ENCODE measurements at regions of chr1 and their contacts with region 1.

Region 1: DNA sequence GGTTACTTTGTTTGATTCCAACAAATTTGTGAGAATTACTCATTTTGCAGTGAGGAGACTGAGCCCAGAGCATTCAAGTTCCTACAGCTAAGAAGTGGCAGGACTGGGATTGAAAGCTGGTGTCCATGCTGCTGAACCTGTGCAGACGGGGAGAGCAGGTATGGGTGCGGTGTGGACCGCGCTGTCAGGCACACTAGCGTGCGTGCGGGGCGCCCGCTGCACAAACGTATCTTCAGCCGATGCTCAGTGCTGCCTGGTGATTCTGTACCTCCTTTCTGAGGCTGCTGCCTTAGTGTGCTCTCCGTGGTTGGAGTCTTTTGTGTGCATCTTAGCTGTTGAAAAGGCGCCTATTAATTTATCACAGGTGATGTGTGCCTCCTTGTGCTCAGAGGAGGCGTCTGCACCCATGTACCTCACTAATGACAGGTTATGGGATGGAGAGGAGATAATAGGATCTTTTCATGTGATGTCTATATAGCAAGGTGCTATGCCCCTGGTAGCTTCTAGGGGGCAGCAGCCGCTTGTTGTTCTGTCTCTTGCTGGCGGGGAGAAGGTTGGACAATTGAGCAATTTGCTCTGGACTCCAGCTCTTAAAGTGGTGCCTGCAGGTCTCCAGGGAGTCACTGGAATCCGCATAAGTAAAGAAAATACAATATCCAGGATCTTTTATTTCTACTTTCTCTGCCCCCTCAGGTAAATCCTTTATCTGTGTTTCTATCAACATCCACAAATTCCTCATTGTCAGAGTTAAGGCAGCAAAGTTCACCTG is 32.5 kb downstream of the PEX14 start:
- DNase-seq: peak; percentile 84
- ATAC-seq: peak; percentile 91
- H3K4me3 ChIP-seq: no peak overlapping the region
- H3K27ac ChIP-seq: no peak overlapping the region
- H3K4me1 ChIP-seq: peaks cover 63% of the 10 kb centered on the region
- H3K27me3 ChIP-seq: no peaks in the 10 kb centered on the region
- CTCF ChIP-seq: peak; percentile 88
- EP300 ChIP-seq: no peak
- POLR2A ChIP-seq: no peak
- RAD21 ChIP-seq: peak; percentile 70

Region 2: DNA sequence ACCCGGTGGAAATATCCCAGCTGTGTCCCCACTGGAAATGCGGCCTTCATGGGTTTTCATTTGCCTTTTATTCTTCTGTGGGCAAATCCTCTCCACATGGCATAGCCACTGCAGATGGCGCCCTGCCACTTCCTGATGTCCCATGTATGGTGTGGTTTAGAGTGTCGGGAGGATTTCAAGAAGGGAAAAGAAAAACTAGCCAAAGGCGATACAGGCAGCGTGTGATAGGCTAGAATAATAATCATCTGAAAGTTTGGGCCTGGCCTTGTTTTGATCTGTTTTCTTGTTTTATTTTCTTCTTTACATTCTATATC is 91.1 kb after region 1 on chr1:
- CTCF ChIA-PET with region 1: no interaction called
- POLR2A ChIA-PET with region 1: no interaction called
- in situ Hi-C with region 1: no loop called
- intact Hi-C with region 1: loop called (anchors 10 kb)
- DNase-seq: no peak
- ATAC-seq: no peak
- H3K4me3 ChIP-seq: 0 out of 6 replicates have a peak overlapping the region, but pooled peaks of 1 of the 3 experiments have one; percentile 0
- H3K27ac ChIP-seq: peak overlapping the region; percentile 69
- H3K4me1 ChIP-seq: peaks cover 46% of the 10 kb centered on the region
- H3K27me3 ChIP-seq: no peaks in the 10 kb centered on the region
- CTCF ChIP-seq: no peak
- EP300 ChIP-seq: no peak
- POLR2A ChIP-seq: no peak
- RAD21 ChIP-seq: no peak

Region 3: DNA sequence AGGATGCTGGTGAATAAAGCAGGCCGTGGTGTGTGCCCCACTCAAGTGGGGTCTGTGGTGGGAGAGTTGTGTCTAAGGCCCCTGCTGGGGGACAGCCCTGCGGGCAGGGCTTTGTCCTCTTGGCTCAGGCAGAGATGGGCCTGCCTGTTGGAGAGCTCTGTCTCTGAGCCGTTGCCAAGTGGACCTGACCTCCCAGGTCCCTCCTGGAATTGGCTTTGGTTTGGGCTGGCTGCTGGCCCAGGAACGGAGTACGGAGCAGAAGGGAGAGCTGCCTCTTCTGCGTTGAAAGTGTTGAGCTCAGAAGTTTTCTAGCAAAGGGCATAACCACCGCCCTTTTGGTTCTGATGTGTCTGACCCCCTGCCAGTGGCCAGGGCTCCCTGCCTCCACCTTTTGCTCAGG is 121.4 kb after region 1 on chr1:
- CTCF ChIA-PET with region 1: no interaction called
- POLR2A ChIA-PET with region 1: no interaction called
- in situ Hi-C with region 1: no loop called
- intact Hi-C with region 1: loop called (anchors 10 kb)
- DNase-seq: no peak
- ATAC-seq: no peak
- H3K4me3 ChIP-seq: no peak overlapping the region
- H3K27ac ChIP-seq: no peak overlapping the region
- H3K4me1 ChIP-seq: peaks cover 10% of the 10 kb centered on the region
- H3K27me3 ChIP-seq: no peaks in the 10 kb centered on the region
- CTCF ChIP-seq: no peak
- EP300 ChIP-seq: no peak
- POLR2A ChIP-seq: no peak
- RAD21 ChIP-seq: no peak

Region 4: DNA sequence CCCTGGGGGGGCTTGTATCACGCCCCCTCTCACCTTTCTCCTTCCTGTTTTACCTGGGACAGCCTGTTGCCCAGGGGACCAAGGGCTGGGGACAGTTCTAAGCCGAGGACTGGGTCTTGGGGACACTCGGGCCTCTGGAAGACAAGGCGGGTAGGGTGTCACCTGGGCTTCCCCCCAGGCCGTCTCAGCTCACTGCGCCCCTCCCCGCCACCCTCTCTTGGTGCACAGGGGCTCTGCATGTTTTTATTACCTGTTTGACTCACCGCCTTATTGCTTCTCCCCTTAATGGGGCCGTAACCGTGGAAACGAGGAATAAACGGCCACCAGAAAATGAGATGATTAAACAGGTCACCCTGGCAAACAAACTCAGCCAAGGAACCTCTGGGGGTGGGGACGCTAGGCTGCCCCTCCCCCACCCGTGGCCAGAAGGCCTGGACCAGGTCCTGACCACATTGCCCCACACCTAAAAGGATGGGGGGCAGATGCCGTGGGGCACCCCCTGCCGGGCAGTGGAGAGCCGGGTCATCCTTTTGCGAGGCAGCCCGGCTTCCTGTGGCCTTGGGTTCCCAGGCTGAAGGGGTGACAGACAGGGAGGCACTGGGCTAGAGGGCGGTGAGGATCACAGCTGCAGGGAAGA is 179.2 kb after region 1 on chr1:
- CTCF ChIA-PET with region 1: no interaction called
- POLR2A ChIA-PET with region 1: interaction called, 3 read pairs
- in situ Hi-C with region 1: no loop called
- intact Hi-C with region 1: loop called (anchors 5 kb)
- DNase-seq: peak; percentile 71
- ATAC-seq: peak; percentile 74
- H3K4me3 ChIP-seq: peak overlapping the region; percentile 35 to 61 (median 39); a peak in 5 of 6 replicates
- H3K27ac ChIP-seq: peak overlapping the region; percentile 90
- H3K4me1 ChIP-seq: peaks cover 77% of the 10 kb centered on the region
- H3K27me3 ChIP-seq: no peaks in the 10 kb centered on the region; a peak in 1 of 5 replicates
- CTCF ChIP-seq: peak; percentile 83
- EP300 ChIP-seq: peak in 1 of 2 experiments; percentile 19; a peak in 1 of 4 replicates
- POLR2A ChIP-seq: no peak
- RAD21 ChIP-seq: peak; percentile 42; the same call in 1 of the 2 replicates

Region 5: GRCh38 chr1:10788592-10789006 is 281.3 kb after region 1 on chr1:
- CTCF ChIA-PET with region 1: interaction called, 6 read pairs
- POLR2A ChIA-PET with region 1: no interaction called
- in situ Hi-C with region 1: loop called (anchors 5 kb)
- intact Hi-C with region 1: no loop called
- DNase-seq: peak; percentile 33
- ATAC-seq: peak; percentile 98
- H3K4me3 ChIP-seq: no peak overlapping the region
- H3K27ac ChIP-seq: no peak overlapping the region
- H3K4me1 ChIP-seq: peaks cover 6% of the 10 kb centered on the region
- H3K27me3 ChIP-seq: peaks cover 6 to 55% of the 10 kb centered on the region in 2 experiments; a peak in 4 of 5 replicates
- CTCF ChIP-seq: peak; percentile 68
- EP300 ChIP-seq: no peak
- POLR2A ChIP-seq: no peak
- RAD21 ChIP-seq: peak; percentile 71

Region 6: DNA sequence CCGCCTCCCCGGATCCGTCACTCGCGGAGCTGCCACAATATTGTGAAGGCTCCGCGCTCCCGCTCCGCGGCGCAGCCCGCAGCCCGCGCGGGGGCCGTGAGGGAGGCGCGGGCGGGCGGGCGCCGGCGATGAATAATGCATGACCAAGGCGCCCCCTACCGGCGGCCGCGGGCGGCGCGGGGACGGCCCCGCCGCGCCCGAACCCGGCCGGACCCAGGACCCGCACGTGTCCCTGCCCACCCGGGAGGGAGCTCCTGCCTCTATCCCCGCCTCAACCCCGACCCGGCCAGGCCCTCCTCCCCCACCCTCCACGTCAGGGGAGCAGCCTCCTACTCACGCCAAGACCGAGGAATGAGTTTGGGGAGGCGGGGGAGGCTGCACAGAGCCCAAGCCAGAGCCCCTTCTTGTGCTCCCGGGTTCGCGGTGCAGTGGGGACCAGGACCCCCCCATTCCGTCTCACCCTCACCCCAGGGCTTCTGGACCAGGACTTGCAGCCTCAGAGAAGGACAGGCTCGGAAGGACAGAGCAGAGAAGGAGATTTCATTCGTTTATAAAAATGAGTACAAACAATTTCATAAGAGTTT is 359.9 kb after region 1 on chr1:
- CTCF ChIA-PET with region 1: no interaction called
- POLR2A ChIA-PET with region 1: no interaction called
- in situ Hi-C with region 1: loop called (anchors 5 kb)
- intact Hi-C with region 1: loop called (anchors 1 kb)
- DNase-seq: no peak
- ATAC-seq: peak; percentile 88
- H3K4me3 ChIP-seq: peak overlapping the region in 2 of 3 experiments; percentile 22 to 52; a peak in 4 of 6 replicates
- H3K27ac ChIP-seq: no peak overlapping the region
- H3K4me1 ChIP-seq: peaks cover 25% of the 10 kb centered on the region
- H3K27me3 ChIP-seq: peaks cover 4 to 67% of the 10 kb centered on the region in 2 experiments
- CTCF ChIP-seq: peak; percentile 49; the same call in 1 of the 2 replicates
- EP300 ChIP-seq: no peak
- POLR2A ChIP-seq: no peak
- RAD21 ChIP-seq: peak; percentile 82

Region 7: GRCh38 chr1:10941891-10942541 is 434.7 kb after region 1 on chr1:
- CTCF ChIA-PET with region 1: no interaction called
- POLR2A ChIA-PET with region 1: no interaction called
- in situ Hi-C with region 1: loop called (anchors 10 kb)
- intact Hi-C with region 1: loop called (anchors 2 kb)
- DNase-seq: no peak
- ATAC-seq: no peak
- H3K4me3 ChIP-seq: peak overlapping the region in 1 of 3 experiments; percentile 36; a peak in 1 of 6 replicates
- H3K27ac ChIP-seq: no peak overlapping the region
- H3K4me1 ChIP-seq: peaks cover 65% of the 10 kb centered on the region
- H3K27me3 ChIP-seq: peaks cover 1 to 23% of the 10 kb centered on the region in 2 experiments; a peak in 4 of 5 replicates
- CTCF ChIP-seq: peak; percentile 89
- EP300 ChIP-seq: no peak
- POLR2A ChIP-seq: no peak
- RAD21 ChIP-seq: peak; percentile 66

Measured in HepG2 (cell line).